CD4-positive, alpha-beta T cell (primary cell): ENCODE measurements at regions of chrX and their contacts with region 1.

Region 1: DNA sequence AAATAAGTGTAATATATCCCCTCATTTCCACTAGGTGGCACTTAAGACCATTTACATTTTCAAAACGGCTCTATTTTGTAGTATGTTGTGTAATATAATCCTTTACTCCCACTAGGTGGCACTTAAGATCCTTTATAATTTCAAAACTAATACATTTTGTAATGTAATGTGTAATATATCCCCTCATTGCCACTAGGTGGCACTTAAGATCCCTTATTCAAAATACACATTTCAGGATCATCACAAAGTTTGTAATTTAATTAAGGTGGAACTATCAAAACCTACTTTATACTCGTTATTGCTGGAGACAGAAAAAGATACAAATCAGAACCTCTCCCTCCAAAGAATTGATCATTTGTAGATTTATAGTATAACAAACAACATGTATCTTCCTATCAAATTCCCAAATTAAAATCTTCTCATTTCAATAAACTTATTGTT is 132.5 kb downstream of the ARHGAP6 start:
- DNase-seq: peak in 3 of 14 experiments; percentile 71 to 77 (median 76)
- ATAC-seq: peak; percentile 99
- H3K4me3 ChIP-seq: no peak overlapping the region
- H3K4me3 Mint-ChIP-seq: no peak overlapping the region
- H3K27ac ChIP-seq: no peak overlapping the region
- H3K27ac Mint-ChIP-seq: no peak overlapping the region
- H3K4me1 ChIP-seq: no peaks in the 10 kb centered on the region
- H3K4me1 Mint-ChIP-seq: no peaks in the 10 kb centered on the region
- H3K27me3 ChIP-seq: no peaks in the 10 kb centered on the region
- H3K27me3 Mint-ChIP-seq: no peaks in the 10 kb centered on the region
- CTCF ChIP-seq: peak; percentile 83

Region 2: GRCh38 chrX:11143931-11144678 is 389.1 kb before region 1 on chrX:
- CTCF ChIA-PET with region 1: no interaction called
- POLR2A ChIA-PET with region 1: no interaction called
- intact Hi-C with region 1: loop called (anchors 10 kb)
- DNase-seq: peak in 12 of 14 experiments; percentile 2 to 77 (median 23)
- ATAC-seq: peak; percentile 68
- H3K4me3 ChIP-seq: no peak overlapping the region
- H3K4me3 Mint-ChIP-seq: no peak overlapping the region
- H3K27ac ChIP-seq: no peak overlapping the region
- H3K27ac Mint-ChIP-seq: no peak overlapping the region
- H3K4me1 ChIP-seq: no peaks in the 10 kb centered on the region
- H3K4me1 Mint-ChIP-seq: no peaks in the 10 kb centered on the region
- H3K27me3 ChIP-seq: no peaks in the 10 kb centered on the region
- H3K27me3 Mint-ChIP-seq: peaks cover 13% of the 10 kb centered on the region
- CTCF ChIP-seq: peak; percentile 58

Region 3: GRCh38 chrX:11770320-11770719 is 237.1 kb after region 1 on chrX:
- CTCF ChIA-PET with region 1: interaction called, 3 read pairs
- POLR2A ChIA-PET with region 1: no interaction called
- intact Hi-C with region 1: loop called (anchors 1 kb)
- DNase-seq: peak in 11 of 14 experiments; percentile 27 to 83 (median 46)
- ATAC-seq: peak; percentile 60
- H3K4me3 ChIP-seq: no peak overlapping the region
- H3K4me3 Mint-ChIP-seq: no peak overlapping the region
- H3K27ac ChIP-seq: peak overlapping the region in 1 of 2 donors; percentile 16
- H3K27ac Mint-ChIP-seq: peak overlapping the region; percentile 79
- H3K4me1 ChIP-seq: peaks cover 26% of the 10 kb centered on the region
- H3K4me1 Mint-ChIP-seq: peaks cover 40% of the 10 kb centered on the region
- H3K27me3 ChIP-seq: no peaks in the 10 kb centered on the region
- H3K27me3 Mint-ChIP-seq: no peaks in the 10 kb centered on the region
- CTCF ChIP-seq: peak; percentile 70

Region 4: GRCh38 chrX:11908371-11908770 is 375.1 kb after region 1 on chrX:
- CTCF ChIA-PET with region 1: no interaction called
- POLR2A ChIA-PET with region 1: no interaction called
- intact Hi-C with region 1: loop called (anchors 5 to 10 kb)
- DNase-seq: peak in 6 of 14 experiments; percentile 2 to 47 (median 20)
- ATAC-seq: peak; percentile 56
- H3K4me3 ChIP-seq: no peak overlapping the region
- H3K4me3 Mint-ChIP-seq: no peak overlapping the region
- H3K27ac ChIP-seq: no peak overlapping the region
- H3K27ac Mint-ChIP-seq: no peak overlapping the region
- H3K4me1 ChIP-seq: no peaks in the 10 kb centered on the region
- H3K4me1 Mint-ChIP-seq: peaks cover 12% of the 10 kb centered on the region
- H3K27me3 ChIP-seq: no peaks in the 10 kb centered on the region
- H3K27me3 Mint-ChIP-seq: no peaks in the 10 kb centered on the region
- CTCF ChIP-seq: no peak

Region 5: DNA sequence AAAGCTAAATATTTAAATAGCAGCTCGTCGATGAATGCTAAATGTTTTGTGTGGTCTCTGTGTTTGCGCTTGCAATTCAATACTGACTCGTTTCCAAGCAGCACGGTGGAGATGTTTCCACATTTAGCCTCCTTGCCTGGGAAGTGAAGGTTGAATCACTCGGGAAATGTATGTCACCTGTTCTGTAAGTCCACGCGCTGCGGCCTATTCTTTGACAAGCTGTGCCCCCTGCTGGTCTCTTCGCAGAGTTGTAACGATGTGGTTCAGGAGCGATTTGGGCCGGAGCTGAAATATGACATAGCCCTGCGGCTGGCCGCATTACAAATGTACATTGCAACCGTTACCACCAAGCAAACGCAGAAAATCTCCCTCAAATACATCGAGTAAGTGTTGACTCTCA is 1168.4 kb after region 1 on chrX:
- CTCF ChIA-PET with region 1: no interaction called
- POLR2A ChIA-PET with region 1: no interaction called
- intact Hi-C with region 1: loop called in 1 of 2 experiments (anchors 2 kb)
- DNase-seq: peak in 4 of 14 experiments; percentile 1 to 29 (median 16)
- ATAC-seq: no peak
- H3K4me3 ChIP-seq: no peak overlapping the region
- H3K4me3 Mint-ChIP-seq: no peak overlapping the region
- H3K27ac ChIP-seq: no peak overlapping the region
- H3K27ac Mint-ChIP-seq: no peak overlapping the region
- H3K4me1 ChIP-seq: no peaks in the 10 kb centered on the region
- H3K4me1 Mint-ChIP-seq: no peaks in the 10 kb centered on the region
- H3K27me3 ChIP-seq: peaks cover 0 to 5% of the 10 kb centered on the region in 2 experiments
- H3K27me3 Mint-ChIP-seq: peaks cover 7% of the 10 kb centered on the region
- CTCF ChIP-seq: peak; percentile 23

Region 6: GRCh38 chrX:12771445-12772069 is 1238.3 kb after region 1 on chrX:
- CTCF ChIA-PET with region 1: interaction called, 10 read pairs
- POLR2A ChIA-PET with region 1: no interaction called
- intact Hi-C with region 1: loop called (anchors 1 to 5 kb)
- DNase-seq: peak; percentile 51 to 89 (median 66)
- ATAC-seq: peak; percentile 100
- H3K4me3 ChIP-seq: no peak overlapping the region
- H3K4me3 Mint-ChIP-seq: peak overlapping the region; percentile 48
- H3K27ac ChIP-seq: no peak overlapping the region
- H3K27ac Mint-ChIP-seq: no peak overlapping the region
- H3K4me1 ChIP-seq: peaks cover 6% of the 10 kb centered on the region
- H3K4me1 Mint-ChIP-seq: peaks cover 13% of the 10 kb centered on the region
- H3K27me3 ChIP-seq: peaks cover 0 to 3% of the 10 kb centered on the region in 2 experiments
- H3K27me3 Mint-ChIP-seq: peaks cover 4% of the 10 kb centered on the region
- CTCF ChIP-seq: peak; percentile 61